ENCODE measurements at regions of chr12 and their contacts with region 1.

Region 1: DNA sequence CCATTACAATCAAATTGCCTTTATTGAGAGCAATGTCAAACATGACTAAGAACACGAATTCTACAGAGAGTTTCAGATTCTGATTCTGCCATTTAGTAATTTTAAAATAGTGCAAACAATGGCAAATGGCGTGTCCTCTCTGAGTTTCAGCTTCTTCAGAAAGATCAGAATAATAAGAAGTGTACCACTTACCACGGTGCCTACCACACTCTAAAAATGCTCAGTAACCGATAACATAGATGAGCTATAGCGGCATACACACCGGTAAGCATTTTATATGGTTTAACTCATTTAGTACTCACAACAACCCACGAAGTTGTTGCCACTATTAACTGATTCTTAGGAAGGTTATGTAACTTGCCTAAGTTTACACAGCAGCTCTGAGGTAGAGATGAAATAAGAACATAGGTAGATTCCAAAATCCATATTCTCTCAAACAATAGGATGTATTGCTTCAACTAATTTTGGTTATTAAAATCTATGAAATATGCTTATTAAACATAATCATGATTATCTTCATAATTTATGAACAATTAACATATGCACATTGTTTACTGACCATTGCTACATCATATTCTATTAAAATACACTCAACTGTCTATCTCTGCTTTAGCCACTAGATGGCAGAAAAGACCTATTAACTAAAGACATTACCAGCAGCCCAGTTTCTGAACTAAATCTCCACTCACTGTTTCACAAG is 38.3 kb downstream of the SLC6A15 start:
- DNase-seq: peak; percentile 60
- ATAC-seq: peak; percentile 87
- H3K4me3 ChIP-seq: no peak overlapping the region
- H3K27ac ChIP-seq: no peak overlapping the region
- H3K4me1 ChIP-seq: no peaks in the 10 kb centered on the region
- H3K27me3 ChIP-seq: no peaks in the 10 kb centered on the region
- CTCF ChIP-seq: peak; percentile 90
- POLR2A ChIP-seq: no peak
- RAD21 ChIP-seq: peak; percentile 83

Region 2: GRCh38 chr12:84856156-84856900 is 17.9 kb before region 1 on chr12:
- CTCF ChIA-PET with region 1: no interaction called
- POLR2A ChIA-PET with region 1: no interaction called
- dilution Hi-C with region 1: no loop called
- in situ Hi-C with region 1: no loop called
- intact Hi-C with region 1: no loop called
- DNase-seq: no peak
- ATAC-seq: no peak
- H3K4me3 ChIP-seq: no peak overlapping the region
- H3K27ac ChIP-seq: no peak overlapping the region
- H3K4me1 ChIP-seq: no peaks in the 10 kb centered on the region
- H3K27me3 ChIP-seq: no peaks in the 10 kb centered on the region
- CTCF ChIP-seq: no peak
- POLR2A ChIP-seq: no peak
- RAD21 ChIP-seq: no peak

Region 3: DNA sequence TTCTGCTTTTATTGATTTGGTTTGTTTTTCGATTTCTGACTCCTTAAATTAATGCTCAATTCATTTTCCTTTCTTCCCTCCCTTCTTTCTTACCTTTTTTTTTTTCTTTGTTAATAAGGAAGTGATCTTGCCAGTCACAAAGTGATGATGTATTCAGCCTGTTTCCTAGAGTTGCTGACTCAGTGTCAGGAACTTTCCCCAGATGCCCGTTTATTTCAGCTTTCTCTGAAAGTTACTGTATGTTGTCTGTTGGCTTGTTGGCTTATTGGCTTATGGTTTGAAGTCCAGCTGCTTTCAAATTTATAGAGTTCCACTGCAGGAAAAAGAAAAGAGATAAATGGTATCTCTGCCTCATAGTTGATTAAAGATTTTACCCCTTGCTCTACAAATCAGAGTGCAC is 50.7 kb after region 1 on chr12:
- CTCF ChIA-PET with region 1: no interaction called
- POLR2A ChIA-PET with region 1: no interaction called
- dilution Hi-C with region 1: no loop called
- in situ Hi-C with region 1: no loop called
- intact Hi-C with region 1: no loop called
- DNase-seq: peak; percentile 23
- ATAC-seq: no peak
- H3K4me3 ChIP-seq: no peak overlapping the region
- H3K27ac ChIP-seq: no peak overlapping the region
- H3K4me1 ChIP-seq: no peaks in the 10 kb centered on the region
- H3K27me3 ChIP-seq: no peaks in the 10 kb centered on the region
- CTCF ChIP-seq: no peak
- POLR2A ChIP-seq: no peak
- RAD21 ChIP-seq: no peak

Region 4: DNA sequence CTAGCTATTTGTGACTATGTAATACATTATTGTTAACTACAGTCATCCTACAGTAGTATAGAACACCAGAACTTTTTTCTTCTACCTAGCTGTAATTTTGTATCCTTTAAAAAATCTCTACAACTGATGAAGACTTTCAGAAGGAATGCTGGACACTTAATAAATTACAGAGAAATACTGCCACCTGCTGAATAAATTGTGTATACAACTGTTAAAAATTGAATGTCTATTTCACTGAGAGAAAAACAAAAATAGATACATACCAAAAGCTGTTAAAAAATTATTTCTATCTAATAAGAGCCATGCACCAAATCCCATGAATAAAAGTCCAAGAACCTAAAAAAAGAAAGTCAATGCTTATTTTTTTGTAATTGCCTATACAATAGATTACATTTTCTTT is 155.2 kb after region 1 on chr12:
- CTCF ChIA-PET with region 1: interaction called, 33 read pairs
- POLR2A ChIA-PET with region 1: no interaction called
- dilution Hi-C with region 1: no loop called
- in situ Hi-C with region 1: loop called (anchors 5 kb)
- intact Hi-C with region 1: loop called (anchors 1 kb)
- DNase-seq: peak; percentile 26
- ATAC-seq: peak; percentile 49; the same call in 1 of the 2 replicates
- H3K4me3 ChIP-seq: no peak overlapping the region
- H3K27ac ChIP-seq: no peak overlapping the region
- H3K4me1 ChIP-seq: no peaks in the 10 kb centered on the region
- H3K27me3 ChIP-seq: no peaks in the 10 kb centered on the region
- CTCF ChIP-seq: peak; percentile 62
- POLR2A ChIP-seq: no peak
- RAD21 ChIP-seq: peak; percentile 54

Region 5: GRCh38 chr12:85036241-85036707 is 162.0 kb after region 1 on chr12 and contains the starts of genes LRRIQ1 and TSPAN19:
- CTCF ChIA-PET with region 1: interaction called, 12 read pairs
- POLR2A ChIA-PET with region 1: no interaction called
- dilution Hi-C with region 1: no loop called
- in situ Hi-C with region 1: no loop called
- intact Hi-C with region 1: no loop called
- DNase-seq: peak; percentile 79
- ATAC-seq: peak; percentile 95
- H3K4me3 ChIP-seq: peak within 1 kb of the TSS; percentile 96
- H3K27ac ChIP-seq: no peak within 1 kb of the TSS
- H3K4me1 ChIP-seq: no peaks in the 10 kb centered on the region
- H3K27me3 ChIP-seq: no peaks in the 10 kb centered on the region
- CTCF ChIP-seq: no peak
- POLR2A ChIP-seq: no peak
- RAD21 ChIP-seq: no peak
- total RNA-seq, gene LRRIQ1: under 0.01 and 0.28 TPM in 2 replicates
- total RNA-seq, gene TSPAN19: not detected in 2 replicates

Region 6: GRCh38 chr12:85057370-85057963 is 183.2 kb after region 1 on chr12:
- CTCF ChIA-PET with region 1: interaction called, 5 read pairs
- POLR2A ChIA-PET with region 1: no interaction called
- dilution Hi-C with region 1: no loop called
- in situ Hi-C with region 1: no loop called
- intact Hi-C with region 1: loop called (anchors 1 kb)
- DNase-seq: peak; percentile 41
- ATAC-seq: peak; percentile 56; the same call in 1 of the 2 replicates
- H3K4me3 ChIP-seq: no peak overlapping the region
- H3K27ac ChIP-seq: no peak overlapping the region
- H3K4me1 ChIP-seq: no peaks in the 10 kb centered on the region
- H3K27me3 ChIP-seq: no peaks in the 10 kb centered on the region
- CTCF ChIP-seq: peak; percentile 67
- POLR2A ChIP-seq: no peak
- RAD21 ChIP-seq: peak; percentile 45

Region 7: GRCh38 chr12:86801439-86801838 is 1927.2 kb after region 1 on chr12:
- CTCF ChIA-PET with region 1: no interaction called
- POLR2A ChIA-PET with region 1: no interaction called
- dilution Hi-C with region 1: no loop called
- in situ Hi-C with region 1: no loop called
- intact Hi-C with region 1: no loop called
- DNase-seq: no peak
- ATAC-seq: no peak
- H3K4me3 ChIP-seq: no peak overlapping the region
- H3K27ac ChIP-seq: no peak overlapping the region
- H3K4me1 ChIP-seq: no peaks in the 10 kb centered on the region
- H3K27me3 ChIP-seq: no peaks in the 10 kb centered on the region
- CTCF ChIP-seq: no peak
- POLR2A ChIP-seq: no peak
- RAD21 ChIP-seq: no peak